PC-3 (cell line): ENCODE measurements at regions of chr1 and their contacts with region 1.

Region 1: GRCh38 chr1:151106894-151107293 is 36.3 kb downstream of the GABPB2 start:
- DNase-seq: peak; percentile 29
- ATAC-seq: peak; percentile 66
- H3K4me3 ChIP-seq: no peak overlapping the region
- H3K27ac ChIP-seq: no peak overlapping the region
- H3K4me1 ChIP-seq: no peaks in the 10 kb centered on the region
- H3K27me3 ChIP-seq: no peaks in the 10 kb centered on the region
- CTCF ChIP-seq: no peak

Region 2: DNA sequence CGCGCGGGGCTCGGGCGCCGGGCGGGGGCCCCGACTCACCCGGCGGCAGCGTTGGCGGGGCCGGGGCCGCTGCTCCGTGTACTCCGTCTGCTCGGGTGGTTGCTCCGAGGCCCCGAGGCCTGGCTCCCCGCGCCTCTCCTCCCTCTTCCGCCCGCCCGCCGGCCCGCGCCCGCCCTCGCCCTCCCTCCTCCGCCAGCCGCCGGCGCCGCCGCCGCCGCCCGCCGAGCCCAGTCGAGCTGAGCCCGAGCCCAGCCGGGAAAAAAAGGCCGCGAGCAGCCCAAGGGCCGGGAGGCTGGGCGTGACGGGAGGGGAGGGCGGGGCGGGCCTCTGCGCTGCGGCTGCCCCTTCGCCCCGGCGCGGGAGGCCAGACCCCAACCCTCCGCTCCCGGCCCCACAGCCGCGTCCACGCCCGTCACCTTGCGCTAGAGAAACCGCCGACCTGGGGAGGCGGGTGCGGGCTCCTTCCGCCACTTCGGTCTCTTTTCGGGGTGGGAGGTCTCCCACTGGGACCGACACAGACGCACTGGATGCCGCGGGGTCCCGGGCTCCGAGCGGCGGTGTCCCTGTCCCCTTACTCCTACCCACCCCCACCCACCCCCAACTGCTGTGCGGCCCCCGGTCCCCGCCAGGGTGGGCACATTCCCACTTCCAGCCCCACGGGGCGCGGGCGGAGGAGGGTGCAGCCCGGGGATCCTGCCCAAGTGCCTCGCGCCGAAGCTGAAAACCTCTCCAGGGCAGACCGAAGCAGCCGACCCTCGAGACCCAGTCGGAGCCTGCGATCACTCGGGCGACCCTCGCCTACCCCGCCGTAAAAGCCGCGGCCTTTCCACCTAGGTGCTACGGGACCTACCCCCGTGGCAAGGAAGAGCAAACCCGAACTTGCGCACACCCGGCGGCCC is 132.1 kb before region 1 on chr1 and contains the start of gene CERS2:
- CTCF ChIA-PET with region 1: no interaction called
- POLR2A ChIA-PET with region 1: no interaction called
- intact Hi-C with region 1: no loop called
- DNase-seq: peak; percentile 89
- ATAC-seq: peak; percentile 54
- H3K4me3 ChIP-seq: peak within 1 kb of the TSS; percentile 90
- H3K27ac ChIP-seq: peak within 1 kb of the TSS; percentile 28; the same call in 1 of the 2 replicates
- H3K4me1 ChIP-seq: peaks cover 53% of the 10 kb centered on the region
- H3K27me3 ChIP-seq: no peaks in the 10 kb centered on the region
- CTCF ChIP-seq: no peak
- total RNA-seq, gene CERS2: 176 TPM in 2 replicates

Region 3: DNA sequence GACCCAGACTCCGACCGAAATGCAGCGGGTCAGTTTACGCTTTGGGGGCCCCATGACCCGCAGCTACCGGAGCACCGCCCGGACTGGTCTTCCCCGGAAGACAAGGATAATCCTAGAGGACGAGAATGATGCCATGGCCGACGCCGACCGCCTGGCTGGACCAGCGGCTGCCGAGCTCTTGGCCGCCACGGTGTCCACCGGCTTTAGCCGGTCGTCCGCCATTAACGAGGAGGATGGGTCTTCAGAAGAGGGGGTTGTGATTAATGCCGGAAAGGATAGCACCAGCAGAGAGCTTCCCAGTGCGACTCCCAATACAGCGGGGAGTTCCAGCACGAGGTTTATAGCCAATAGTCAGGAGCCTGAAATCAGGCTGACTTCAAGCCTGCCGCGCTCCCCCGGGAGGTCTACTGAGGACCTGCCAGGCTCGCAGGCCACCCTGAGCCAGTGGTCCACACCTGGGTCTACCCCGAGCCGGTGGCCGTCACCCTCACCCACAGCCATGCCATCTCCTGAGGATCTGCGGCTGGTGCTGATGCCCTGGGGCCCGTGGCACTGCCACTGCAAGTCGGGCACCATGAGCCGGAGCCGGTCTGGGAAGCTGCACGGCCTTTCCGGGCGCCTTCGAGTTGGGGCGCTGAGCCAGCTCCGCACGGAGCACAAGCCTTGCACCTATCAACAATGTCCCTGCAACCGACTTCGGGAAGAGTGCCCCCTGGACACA is 58.8 kb before region 1 on chr1:
- CTCF ChIA-PET with region 1: no interaction called
- POLR2A ChIA-PET with region 1: no interaction called
- intact Hi-C with region 1: no loop called
- DNase-seq: peak; percentile 74
- ATAC-seq: peak; percentile 70
- H3K4me3 ChIP-seq: peak overlapping the region; percentile 77
- H3K27ac ChIP-seq: peak overlapping the region; percentile 12
- H3K4me1 ChIP-seq: peaks cover 12% of the 10 kb centered on the region
- H3K27me3 ChIP-seq: no peaks in the 10 kb centered on the region
- CTCF ChIP-seq: peak; percentile 74

Region 4: DNA sequence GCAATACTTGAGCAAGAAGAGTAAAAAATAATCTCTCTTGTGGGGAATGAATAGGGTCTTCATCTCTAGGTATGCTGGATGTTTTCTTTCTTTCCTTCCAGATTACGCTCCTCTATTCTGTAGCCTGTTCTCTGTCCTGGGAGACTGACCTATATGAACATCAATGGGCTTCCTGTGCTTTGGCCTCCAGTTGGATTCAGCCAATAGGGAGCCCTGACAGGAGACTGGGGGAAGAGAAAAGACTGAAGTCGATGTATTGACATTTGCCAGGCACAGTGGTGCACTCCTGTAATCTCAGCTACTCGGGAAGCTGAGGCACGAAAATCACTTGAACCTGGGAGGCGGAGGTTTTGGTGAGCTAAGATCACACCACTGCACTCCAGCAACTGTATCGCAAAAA is 21.9 kb after region 1 on chr1:
- CTCF ChIA-PET with region 1: interaction called, 10 read pairs
- POLR2A ChIA-PET with region 1: no interaction called
- intact Hi-C with region 1: no loop called
- DNase-seq: no peak
- ATAC-seq: no peak
- H3K4me3 ChIP-seq: no peak overlapping the region
- H3K27ac ChIP-seq: no peak overlapping the region
- H3K4me1 ChIP-seq: no peaks in the 10 kb centered on the region
- H3K27me3 ChIP-seq: no peaks in the 10 kb centered on the region
- CTCF ChIP-seq: no peak

Region 5: DNA sequence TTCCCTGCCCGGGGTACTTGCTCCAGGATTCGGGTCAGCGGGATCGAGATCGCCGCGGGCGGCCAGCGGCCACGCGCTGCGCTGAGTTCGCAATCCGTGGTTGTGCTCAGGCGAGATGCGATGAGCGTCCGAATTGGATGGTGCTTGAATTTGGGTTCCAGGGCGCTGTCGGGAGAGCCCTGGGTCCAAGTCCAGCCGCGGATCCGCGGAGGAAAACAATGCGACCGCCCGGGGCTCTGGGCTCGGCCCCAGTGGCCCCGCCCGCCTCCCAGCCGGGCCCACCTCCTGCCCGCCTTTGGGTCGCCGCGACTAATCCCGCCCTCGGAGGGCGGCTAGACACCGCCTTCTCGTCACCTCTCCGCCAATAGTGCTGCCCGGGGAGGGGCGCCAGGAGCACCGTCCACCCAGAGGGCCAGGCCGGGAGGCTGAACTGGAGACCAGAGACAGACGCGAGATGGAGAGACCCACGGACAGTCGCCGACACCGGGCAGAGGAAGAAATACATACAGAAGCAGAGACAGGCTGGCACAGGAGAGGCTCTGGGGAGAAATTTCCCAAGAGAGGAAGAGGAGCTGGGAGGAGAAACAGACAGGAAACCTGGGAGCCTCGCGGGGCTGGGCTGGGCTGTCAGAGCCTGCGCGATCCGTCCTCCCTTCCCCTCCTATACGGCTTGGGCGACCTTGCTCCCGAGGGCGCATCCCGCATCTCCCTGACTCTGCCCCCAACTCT is 39.7 kb after region 1 on chr1 and contains the start of gene SEMA6C:
- CTCF ChIA-PET with region 1: no interaction called
- POLR2A ChIA-PET with region 1: no interaction called
- intact Hi-C with region 1: loop called (anchors 5 kb)
- DNase-seq: peak; percentile 96
- ATAC-seq: peak; percentile 100
- H3K4me3 ChIP-seq: peak within 1 kb of the TSS; percentile 70
- H3K27ac ChIP-seq: no peak within 1 kb of the TSS
- H3K4me1 ChIP-seq: peaks cover 8% of the 10 kb centered on the region; the same call in 1 of the 2 replicates
- H3K27me3 ChIP-seq: no peaks in the 10 kb centered on the region
- CTCF ChIP-seq: no peak
- total RNA-seq, gene SEMA6C: 2.0 and 2.8 TPM in 2 replicates

Region 6: GRCh38 chr1:151156515-151156819 is 49.6 kb after region 1 on chr1 and contains the start of gene TNFAIP8L2:
- CTCF ChIA-PET with region 1: interaction called, 28 read pairs
- POLR2A ChIA-PET with region 1: no interaction called
- intact Hi-C with region 1: no loop called
- DNase-seq: no peak
- ATAC-seq: peak; percentile 81
- H3K4me3 ChIP-seq: no peak within 1 kb of the TSS
- H3K27ac ChIP-seq: no peak within 1 kb of the TSS
- H3K4me1 ChIP-seq: no peaks in the 10 kb centered on the region
- H3K27me3 ChIP-seq: no peaks in the 10 kb centered on the region
- CTCF ChIP-seq: no peak
- total RNA-seq, gene TNFAIP8L2: not detected in 2 replicates